ENCODE measurements at regions of chr17 and their contacts with region 1.

Region 1: GRCh38 chr17:27293898-27294688 is at the start of gene WSB1:
- DNase-seq: peak; percentile 95 to 96
- ATAC-seq: peak; percentile 80 to 94 (median 88)
- H3K4me3 ChIP-seq: peak within 1 kb of the TSS; percentile 72
- H3K4me3 Mint-ChIP-seq: peak within 1 kb of the TSS; percentile 99
- H3K27ac ChIP-seq: peak within 1 kb of the TSS; percentile 98
- H3K27ac Mint-ChIP-seq: peak within 1 kb of the TSS; percentile 99
- H3K4me1 ChIP-seq: peaks cover 33% of the 10 kb centered on the region
- H3K4me1 Mint-ChIP-seq: peaks cover 43 to 61% of the 10 kb centered on the region in 2 donors
- H3K27me3 ChIP-seq: no peaks in the 10 kb centered on the region
- H3K27me3 Mint-ChIP-seq: no peaks in the 10 kb centered on the region
- CTCF ChIP-seq: no peak
- total RNA-seq, gene WSB1: 124 to 205 (median 187) TPM

Region 2: DNA sequence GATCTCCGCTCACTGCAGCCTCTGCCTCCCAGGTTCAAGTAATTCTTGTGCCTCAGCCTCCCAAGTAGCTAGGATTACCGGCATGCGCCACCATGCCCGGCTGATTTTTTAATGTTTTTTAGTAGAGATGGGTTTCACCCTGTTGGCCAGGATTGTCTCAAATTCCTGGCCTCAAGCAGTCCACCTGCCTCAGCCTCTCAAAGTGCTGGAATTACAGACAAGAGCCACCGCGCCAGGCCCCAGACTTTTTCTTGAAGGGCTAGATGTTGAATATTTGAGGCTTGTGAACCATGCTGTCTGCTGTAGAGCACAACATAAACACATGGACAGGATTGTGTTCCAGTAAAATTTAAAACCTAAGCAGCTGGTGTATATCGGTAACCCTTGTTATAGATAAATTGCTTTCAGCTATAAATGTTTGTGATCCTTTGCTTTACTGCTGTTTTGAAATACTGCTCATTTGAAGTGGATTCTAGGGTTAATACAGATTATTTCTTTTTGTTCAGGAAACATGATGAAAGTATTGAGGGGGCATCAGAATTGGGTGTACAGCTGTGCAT is 12.3 kb after region 1 on chr17:
- intact Hi-C with region 1: no loop called
- DNase-seq: no peak
- ATAC-seq: no peak
- H3K4me3 ChIP-seq: no peak overlapping the region
- H3K4me3 Mint-ChIP-seq: no peak overlapping the region
- H3K27ac ChIP-seq: no peak overlapping the region
- H3K27ac Mint-ChIP-seq: peak overlapping the region; percentile 14 to 71
- H3K4me1 ChIP-seq: no peaks in the 10 kb centered on the region
- H3K4me1 Mint-ChIP-seq: peaks cover 28 to 38% of the 10 kb centered on the region in 2 donors
- H3K27me3 ChIP-seq: no peaks in the 10 kb centered on the region
- H3K27me3 Mint-ChIP-seq: no peaks in the 10 kb centered on the region
- CTCF ChIP-seq: no peak

Region 3: GRCh38 chr17:27332485-27333409 is 38.7 kb after region 1 on chr17:
- intact Hi-C with region 1: loop called (anchors 1 kb)
- DNase-seq: peak; percentile 88 to 92
- ATAC-seq: peak; percentile 82 to 94 (median 86)
- H3K4me3 ChIP-seq: peak overlapping the region; percentile 74
- H3K4me3 Mint-ChIP-seq: peak overlapping the region; percentile 93
- H3K27ac ChIP-seq: peak overlapping the region; percentile 90
- H3K27ac Mint-ChIP-seq: peak overlapping the region; percentile 86 to 97
- H3K4me1 ChIP-seq: peaks cover 35% of the 10 kb centered on the region
- H3K4me1 Mint-ChIP-seq: peaks cover 23 to 29% of the 10 kb centered on the region in 2 donors
- H3K27me3 ChIP-seq: no peaks in the 10 kb centered on the region
- H3K27me3 Mint-ChIP-seq: no peaks in the 10 kb centered on the region
- CTCF ChIP-seq: peak; percentile 74

Measured in natural killer cell (primary cell).